ENCODE measurements at regions of chr17 and their contacts with region 1.

Region 1: GRCh38 chr17:2179615-2180295 is 123.8 kb downstream of the SMG6 start:
- DNase-seq: peak; percentile 83 to 93 (median 91)
- H3K4me3 ChIP-seq: no peak overlapping the region
- H3K27ac ChIP-seq: peak overlapping the region; percentile 66 to 85
- H3K4me1 ChIP-seq: peaks cover 66% of the 10 kb centered on the region
- H3K27me3 ChIP-seq: no peaks in the 10 kb centered on the region
- CTCF ChIP-seq: no peak
- EP300 ChIP-seq: no peak
- POLR2A ChIP-seq: no peak

Region 2: DNA sequence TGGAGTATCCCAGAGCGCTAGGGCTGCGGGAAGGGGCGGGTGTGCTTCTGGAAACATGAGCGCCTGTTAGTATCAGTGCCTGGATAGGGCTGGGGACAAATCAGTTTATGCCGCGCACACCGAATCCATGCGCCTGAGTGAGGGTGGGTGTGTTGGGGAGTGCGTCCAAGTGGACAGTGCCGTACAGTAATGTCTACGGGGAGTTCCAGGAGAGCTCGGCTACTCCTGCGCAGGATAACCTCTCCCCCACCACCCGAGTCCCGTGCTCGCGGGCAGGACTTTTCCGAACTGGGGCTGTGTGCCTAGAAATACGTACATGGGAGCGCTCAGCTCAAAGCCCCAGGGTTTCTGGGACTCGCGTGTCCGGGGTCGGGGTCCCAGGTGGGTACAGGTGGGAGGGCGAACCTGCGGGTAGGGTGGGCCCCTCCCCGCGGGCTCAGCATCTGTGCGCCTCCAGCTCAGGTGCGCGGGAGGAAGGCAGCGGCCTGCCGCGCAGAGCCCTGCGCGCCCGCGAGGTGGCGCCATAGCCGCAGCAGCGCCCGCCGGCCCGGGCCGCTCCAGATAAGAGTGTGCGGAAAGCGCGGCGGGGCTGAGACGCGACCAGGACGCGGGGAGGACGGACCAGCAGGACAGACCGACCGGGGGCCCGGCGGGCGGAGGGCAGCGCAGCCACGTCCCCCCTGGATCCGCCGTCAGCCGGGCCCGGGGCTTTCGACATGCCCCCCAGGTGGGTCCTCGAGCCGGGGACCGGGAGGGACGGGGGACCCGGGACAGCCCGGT is 125.1 kb before region 1 on chr17 and contains the start of gene HIC1:
- intact Hi-C with region 1: loop called (anchors 2 to 5 kb)
- DNase-seq: peak; percentile 81 to 90 (median 87)
- H3K4me3 ChIP-seq: peak within 1 kb of the TSS; percentile 41
- H3K27ac ChIP-seq: peak within 1 kb of the TSS; percentile 89 to 98
- H3K4me1 ChIP-seq: peaks cover 8% of the 10 kb centered on the region
- H3K27me3 ChIP-seq: no peaks in the 10 kb centered on the region
- CTCF ChIP-seq: peak; percentile 98 to 99 (median 99)
- EP300 ChIP-seq: no peak
- POLR2A ChIP-seq: peak; percentile 84
- total RNA-seq, gene HIC1: 35.0 to 108 (median 68.0) TPM

Region 3: DNA sequence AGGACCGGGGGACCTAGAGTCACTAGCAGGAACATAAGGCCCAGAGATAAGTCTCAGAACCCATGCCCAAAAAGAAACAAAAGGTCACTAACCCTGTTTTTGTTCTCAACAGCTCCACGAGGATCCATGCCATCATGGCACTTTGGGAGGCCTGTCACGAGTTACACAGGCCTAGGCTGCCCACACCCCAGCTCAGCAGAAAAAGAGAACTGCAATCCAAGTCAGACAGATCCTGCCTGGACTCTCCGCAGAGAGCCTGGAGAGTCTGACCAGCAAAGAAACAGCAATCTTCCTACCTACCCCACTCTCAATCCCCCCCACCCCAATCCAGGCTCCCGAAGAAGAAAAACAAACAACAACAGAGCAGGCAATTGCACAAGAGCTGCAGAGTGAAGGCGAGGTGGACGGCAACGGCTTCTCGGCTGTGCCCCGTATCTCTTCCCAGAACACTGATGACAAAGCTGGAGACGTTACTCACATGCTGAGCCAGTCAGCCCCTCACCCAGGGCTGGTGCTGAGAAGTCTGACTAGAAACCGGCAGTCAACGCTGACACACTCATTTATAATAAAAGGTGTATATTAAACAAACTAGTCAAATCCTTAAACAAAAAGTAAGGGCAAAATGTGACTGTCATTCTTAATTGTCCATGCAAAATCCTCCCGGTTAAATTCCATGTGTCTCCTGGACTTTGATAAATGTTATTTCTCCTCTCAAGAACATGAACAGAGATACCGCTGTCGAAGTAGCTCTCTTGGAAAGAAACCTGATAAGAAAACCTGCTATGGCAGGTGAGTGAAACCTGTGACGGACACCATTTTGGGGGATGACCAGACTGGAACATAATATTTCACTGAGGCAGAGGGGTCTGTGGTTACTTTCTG is 34.5 kb after region 1 on chr17:
- intact Hi-C with region 1: loop called in 1 of 4 experiments (anchors 5 kb)
- DNase-seq: peak; percentile 55 to 75 (median 60)
- H3K4me3 ChIP-seq: no peak overlapping the region
- H3K27ac ChIP-seq: peak overlapping the region; percentile 44 to 94
- H3K4me1 ChIP-seq: peaks cover 21% of the 10 kb centered on the region
- H3K27me3 ChIP-seq: no peaks in the 10 kb centered on the region
- CTCF ChIP-seq: no peak
- EP300 ChIP-seq: peak; percentile 35
- POLR2A ChIP-seq: peak; percentile 38

Region 4: GRCh38 chr17:2237521-2237921 is 57.8 kb after region 1 on chr17:
- intact Hi-C with region 1: loop called in 3 of 4 experiments (anchors 2 to 10 kb)
- DNase-seq: peak; percentile 75 to 85 (median 81)
- H3K4me3 ChIP-seq: no peak overlapping the region
- H3K27ac ChIP-seq: peak overlapping the region in 1 of 2 donors; percentile 79
- H3K4me1 ChIP-seq: peaks cover 27% of the 10 kb centered on the region
- H3K27me3 ChIP-seq: no peaks in the 10 kb centered on the region
- CTCF ChIP-seq: no peak
- EP300 ChIP-seq: no peak
- POLR2A ChIP-seq: no peak

Measured in ovary (tissue), 10 donors.